HEK293 (cell line): ENCODE measurements at regions of chr17 and their contacts with region 1.

Region 1: DNA sequence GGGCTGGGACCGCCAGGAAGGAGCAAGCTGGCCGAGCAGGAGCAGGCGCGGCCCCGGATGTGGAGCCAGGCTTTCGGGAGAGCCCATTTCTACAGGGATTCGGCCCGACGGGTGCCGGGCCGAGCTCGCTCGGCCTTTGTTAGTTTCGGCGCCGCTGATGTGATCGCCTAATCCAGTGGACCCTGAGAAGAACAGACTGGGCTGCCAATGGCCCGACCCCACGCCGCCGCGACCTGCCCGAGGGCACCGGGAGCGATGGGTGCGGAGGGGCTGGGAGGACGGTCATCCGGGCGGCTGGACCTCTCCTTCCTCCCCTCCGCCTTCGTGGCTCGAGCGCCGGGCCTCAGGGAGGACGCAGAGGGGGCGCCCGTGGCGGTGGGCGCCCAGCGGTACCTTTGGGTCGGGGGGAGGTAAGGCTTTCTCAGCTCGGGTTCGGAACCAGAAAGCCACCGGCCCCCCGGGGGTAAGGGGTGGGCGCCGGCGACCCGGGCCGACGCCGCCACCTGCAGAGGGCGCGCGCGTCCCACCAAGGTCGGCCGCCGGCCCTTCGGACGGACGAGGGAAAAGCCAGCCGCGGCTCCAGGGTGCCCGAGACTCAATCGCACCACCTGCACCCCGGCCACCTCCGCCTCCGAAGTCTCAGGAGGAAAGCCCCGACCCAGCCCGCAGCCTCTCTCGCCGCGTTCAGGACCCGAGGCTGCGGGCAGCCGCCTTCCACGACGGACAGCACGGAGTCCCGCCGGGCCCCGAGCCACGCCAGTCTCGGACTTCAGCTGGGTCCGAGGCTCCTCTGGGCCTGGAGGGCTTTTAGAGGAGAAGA is 7.1 kb downstream of the CBX8 start:
- H3K4me3 ChIP-seq: no peak overlapping the region
- H3K27ac ChIP-seq: no peak overlapping the region; the same call in 1 of the 2 replicates
- H3K4me1 ChIP-seq: peaks cover 12% of the 10 kb centered on the region
- CTCF ChIP-seq: no peak

Region 2: GRCh38 chr17:79707931-79708891 is 81.5 kb before region 1 on chr17:
- CTCF ChIA-PET with region 1: no interaction called
- POLR2A ChIA-PET with region 1: no interaction called
- H3K4me3 ChIP-seq: no peak overlapping the region
- H3K27ac ChIP-seq: no peak overlapping the region
- H3K4me1 ChIP-seq: no peaks in the 10 kb centered on the region
- CTCF ChIP-seq: peak; percentile 67

Region 3: GRCh38 chr17:79777894-79778503 is 11.7 kb before region 1 on chr17 and contains the start of gene CBX2:
- CTCF ChIA-PET with region 1: interaction called, 15 read pairs
- POLR2A ChIA-PET with region 1: interaction called, 4 read pairs
- H3K4me3 ChIP-seq: peak within 1 kb of the TSS; percentile 67
- H3K27ac ChIP-seq: peak within 1 kb of the TSS; percentile 85
- H3K4me1 ChIP-seq: peaks cover 21% of the 10 kb centered on the region
- CTCF ChIP-seq: no peak